K562 (cell line): ENCODE measurements at regions of chr10 and their contacts with region 1.

Region 1: GRCh38 chr10:93006435-93007039 is 54.1 kb upstream of the CYP26C1 start:
- DNase-seq: peak in 2 of 4 experiments; percentile 7 to 44
- ATAC-seq: peak; percentile 79
- H3K4me3 ChIP-seq: no peak overlapping the region
- H3K27ac ChIP-seq: no peak overlapping the region
- H3K4me1 ChIP-seq: no peaks in the 10 kb centered on the region; a peak in 3 of 5 replicates
- H3K27me3 ChIP-seq: no peaks in the 10 kb centered on the region
- CTCF ChIP-seq: peak; percentile 45 to 68 (median 58); a peak in 5 of 6 replicates
- EP300 ChIP-seq: no peak
- POLR2A ChIP-seq: no peak
- RAD21 ChIP-seq: peak; percentile 33 to 67; a peak in 3 of 4 replicates

Region 2: GRCh38 chr10:93063144-93063976 is 56.8 kb after region 1 on chr10:
- CTCF ChIA-PET with region 1: no interaction called
- POLR2A ChIA-PET with region 1: no interaction called
- in situ Hi-C with region 1: no loop called
- intact Hi-C with region 1: no loop called
- DNase-seq: no peak
- ATAC-seq: no peak
- H3K4me3 ChIP-seq: no peak overlapping the region
- H3K27ac ChIP-seq: no peak overlapping the region
- H3K4me1 ChIP-seq: peaks cover 0 to 2% of the 10 kb centered on the region in 2 experiments; a peak in 1 of 5 replicates
- H3K27me3 ChIP-seq: no peaks in the 10 kb centered on the region
- CTCF ChIP-seq: no peak
- EP300 ChIP-seq: no peak
- POLR2A ChIP-seq: no peak
- RAD21 ChIP-seq: no peak

Region 3: GRCh38 chr10:93074147-93074596 is 67.6 kb after region 1 on chr10:
- CTCF ChIA-PET with region 1: no interaction called
- POLR2A ChIA-PET with region 1: no interaction called
- in situ Hi-C with region 1: no loop called
- intact Hi-C with region 1: loop called (anchors 5 kb)
- DNase-seq: peak in 2 of 4 experiments; percentile 33 to 42
- ATAC-seq: no peak
- H3K4me3 ChIP-seq: no peak overlapping the region
- H3K27ac ChIP-seq: no peak overlapping the region
- H3K4me1 ChIP-seq: peaks cover 33 to 56% of the 10 kb centered on the region in 2 experiments; a peak in 4 of 5 replicates
- H3K27me3 ChIP-seq: no peaks in the 10 kb centered on the region
- CTCF ChIP-seq: peak in 1 of 3 experiments; percentile 34; a peak in 2 of 6 replicates
- EP300 ChIP-seq: no peak
- POLR2A ChIP-seq: no peak
- RAD21 ChIP-seq: no peak

Region 4: GRCh38 chr10:93180482-93180931 is 174.0 kb after region 1 on chr10:
- CTCF ChIA-PET with region 1: no interaction called
- POLR2A ChIA-PET with region 1: no interaction called
- in situ Hi-C with region 1: no loop called
- intact Hi-C with region 1: no loop called
- DNase-seq: peak in 1 of 4 experiments; percentile 8
- ATAC-seq: 0 out of 3 replicates have a peak, but pooled peaks have one; percentile 25
- H3K4me3 ChIP-seq: no peak overlapping the region
- H3K27ac ChIP-seq: no peak overlapping the region
- H3K4me1 ChIP-seq: peaks cover 0 to 5% of the 10 kb centered on the region in 2 experiments; a peak in 2 of 5 replicates
- H3K27me3 ChIP-seq: peaks cover 0 to 4% of the 10 kb centered on the region in 2 experiments; a peak in 3 of 5 replicates
- CTCF ChIP-seq: no peak
- EP300 ChIP-seq: no peak
- POLR2A ChIP-seq: no peak
- RAD21 ChIP-seq: no peak